ENCODE measurements at regions of chr5 and their contacts with region 1.

Region 1: GRCh38 chr5:151771259-151772028 is at the start of gene G3BP1:
- DNase-seq: peak; percentile 100
- ATAC-seq: peak; percentile 86
- H3K4me3 Mint-ChIP-seq: peak within 1 kb of the TSS; percentile 94
- H3K27ac Mint-ChIP-seq: peak within 1 kb of the TSS; percentile 17
- H3K4me1 Mint-ChIP-seq: peaks cover 38% of the 10 kb centered on the region
- H3K27me3 Mint-ChIP-seq: no peaks in the 10 kb centered on the region
- CTCF ChIP-seq: no peak
- total RNA-seq, gene G3BP1: 396 to 413 TPM (median 400 TPM) in 3 replicates

Region 2: DNA sequence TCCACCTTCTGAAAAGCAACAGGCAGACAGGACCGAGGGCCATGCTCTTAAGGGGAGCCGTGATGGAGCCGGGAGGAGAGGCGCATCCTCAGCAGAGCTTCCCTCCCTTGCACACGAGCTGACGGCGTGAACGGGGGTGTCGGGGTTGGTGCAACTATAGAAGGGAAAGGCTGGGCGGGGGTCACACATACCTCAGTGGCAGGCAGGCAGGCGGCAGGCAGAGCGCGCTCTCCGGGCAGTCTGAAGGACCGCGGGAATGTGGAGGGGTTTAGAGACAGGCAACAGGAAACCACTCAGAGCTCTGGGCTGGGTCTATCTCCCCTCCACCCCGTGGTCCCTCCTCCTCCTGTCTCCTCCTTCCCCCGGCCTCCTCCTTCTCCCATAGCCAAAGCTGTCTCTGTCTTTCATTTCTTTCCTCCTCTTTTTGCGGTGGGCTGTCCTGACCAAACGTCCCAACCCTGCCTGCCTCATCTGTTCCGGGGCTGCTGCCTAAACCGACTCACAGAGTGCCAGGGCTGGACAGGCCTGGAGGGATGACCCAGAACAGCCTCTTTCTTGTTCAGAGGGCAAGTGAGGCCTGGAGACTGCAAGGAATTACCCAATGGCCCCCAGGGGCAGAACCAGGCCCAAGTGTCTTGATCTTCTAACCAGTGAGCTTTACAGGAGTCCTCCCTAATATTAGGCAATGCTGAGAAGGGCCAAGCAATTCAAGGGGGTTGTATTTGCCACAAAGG is 84.6 kb before region 1 on chr5 and contains the start of gene SPARC:
- CTCF ChIA-PET with region 1: interaction called, 3 read pairs
- POLR2A ChIA-PET with region 1: interaction called, 10 read pairs
- DNase-seq: peak; percentile 78
- ATAC-seq: peak; percentile 93
- H3K4me3 Mint-ChIP-seq: peak within 1 kb of the TSS; percentile 87
- H3K27ac Mint-ChIP-seq: peak within 1 kb of the TSS; percentile 84
- H3K4me1 Mint-ChIP-seq: peaks cover 41% of the 10 kb centered on the region
- H3K27me3 Mint-ChIP-seq: no peaks in the 10 kb centered on the region
- CTCF ChIP-seq: no peak
- total RNA-seq, gene SPARC: 357 to 418 TPM (median 358 TPM) in 3 replicates

Region 3: GRCh38 chr5:151758430-151759241 is 12.8 kb before region 1 on chr5 and contains the start of gene ATOX1:
- CTCF ChIA-PET with region 1: interaction called, 25 read pairs
- POLR2A ChIA-PET with region 1: interaction called, 27 read pairs
- DNase-seq: peak; percentile 93
- ATAC-seq: peak; percentile 96
- H3K4me3 Mint-ChIP-seq: peak within 1 kb of the TSS; percentile 84
- H3K27ac Mint-ChIP-seq: peak within 1 kb of the TSS; percentile 94
- H3K4me1 Mint-ChIP-seq: peaks cover 39% of the 10 kb centered on the region
- H3K27me3 Mint-ChIP-seq: no peaks in the 10 kb centered on the region
- CTCF ChIP-seq: no peak
- total RNA-seq, gene ATOX1: 76.4 to 79.3 TPM (median 77.4 TPM) in 3 replicates

Region 4: DNA sequence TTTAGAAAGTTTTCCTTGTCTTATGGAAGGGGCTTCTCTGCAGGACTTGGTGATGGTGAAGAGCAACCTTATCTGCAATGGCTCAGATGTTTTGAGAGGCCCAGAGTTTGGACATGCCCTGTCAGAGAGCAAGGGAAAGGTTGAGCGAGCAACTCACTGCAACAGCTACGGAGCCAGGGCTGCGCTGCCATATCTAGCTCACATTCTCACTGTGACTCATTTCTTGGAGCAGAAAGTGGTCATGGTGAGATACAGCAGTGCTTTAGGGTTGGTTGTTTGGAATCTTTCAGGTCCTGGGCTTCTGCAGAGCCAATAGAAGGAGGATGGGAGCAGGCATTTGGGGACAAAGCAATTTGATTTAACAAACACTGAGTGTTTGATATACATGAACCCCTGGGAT is 140.9 kb after region 1 on chr5:
- CTCF ChIA-PET with region 1: no interaction called
- POLR2A ChIA-PET with region 1: no interaction called
- DNase-seq: no peak
- ATAC-seq: peak; percentile 76
- H3K4me3 Mint-ChIP-seq: no peak overlapping the region
- H3K27ac Mint-ChIP-seq: no peak overlapping the region
- H3K4me1 Mint-ChIP-seq: peaks cover 11% of the 10 kb centered on the region
- H3K27me3 Mint-ChIP-seq: peaks cover 89% of the 10 kb centered on the region
- CTCF ChIP-seq: no peak